Right ventricle myocardium superior (tissue), 1 donor: ENCODE measurements at regions of chr3 and their contacts with region 1.

Region 1: GRCh38 chr3:128322066-128323022 is 144.3 kb downstream of the DNAJB8 start:
- DNase-seq: peak; percentile 72
- ATAC-seq: peak; percentile 63

Region 2: GRCh38 chr3:128170805-128171516 is 151.4 kb before region 1 on chr3:
- intact Hi-C with region 1: loop called (anchors 5 kb)
- DNase-seq: peak; percentile 59
- ATAC-seq: peak; percentile 76

Region 3: DNA sequence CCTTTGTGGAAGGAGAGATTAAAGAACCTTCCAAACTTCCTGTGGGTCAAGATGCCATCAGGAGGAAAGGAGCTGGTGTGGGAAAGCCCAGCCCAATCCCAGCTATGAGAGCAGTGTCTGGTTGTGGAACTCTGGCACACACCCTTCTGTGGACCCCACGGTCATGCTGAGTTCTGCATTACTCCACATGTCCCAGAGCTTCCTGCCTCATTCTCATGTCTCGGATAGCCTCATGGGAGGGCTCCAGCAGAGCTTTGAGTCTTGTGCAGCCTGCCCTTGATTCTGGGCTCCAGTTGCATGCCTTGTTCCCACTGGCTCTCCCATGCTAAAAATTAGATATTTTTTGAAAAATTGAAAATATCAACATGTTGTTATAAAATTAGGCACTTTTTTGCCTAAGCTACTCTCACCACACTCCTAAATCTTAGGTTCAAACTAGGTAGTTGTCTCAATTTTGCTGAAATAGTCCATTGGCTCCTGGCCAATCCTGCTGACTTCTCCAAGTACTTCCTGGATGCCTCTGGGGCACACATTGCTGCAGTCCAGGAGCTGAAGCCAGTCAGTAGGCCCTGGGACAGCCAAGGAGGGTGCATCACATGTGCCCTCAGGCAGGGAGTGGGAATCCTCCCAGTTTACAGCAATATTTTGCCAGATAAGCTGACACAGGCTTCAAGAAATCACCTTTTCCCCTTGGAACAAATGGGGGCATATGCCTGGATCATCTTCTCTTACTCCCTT is 24.8 kb before region 1 on chr3:
- intact Hi-C with region 1: no loop called
- DNase-seq: no peak
- ATAC-seq: peak; percentile 67

Region 4: GRCh38 chr3:128497387-128498126 is 175.2 kb after region 1 on chr3:
- intact Hi-C with region 1: no loop called
- DNase-seq: peak; percentile 79
- ATAC-seq: peak; percentile 84